Naive thymus-derived CD4-positive, alpha-beta T cell (primary cell): ENCODE measurements at regions of chr2 and their contacts with region 1.

Region 1: DNA sequence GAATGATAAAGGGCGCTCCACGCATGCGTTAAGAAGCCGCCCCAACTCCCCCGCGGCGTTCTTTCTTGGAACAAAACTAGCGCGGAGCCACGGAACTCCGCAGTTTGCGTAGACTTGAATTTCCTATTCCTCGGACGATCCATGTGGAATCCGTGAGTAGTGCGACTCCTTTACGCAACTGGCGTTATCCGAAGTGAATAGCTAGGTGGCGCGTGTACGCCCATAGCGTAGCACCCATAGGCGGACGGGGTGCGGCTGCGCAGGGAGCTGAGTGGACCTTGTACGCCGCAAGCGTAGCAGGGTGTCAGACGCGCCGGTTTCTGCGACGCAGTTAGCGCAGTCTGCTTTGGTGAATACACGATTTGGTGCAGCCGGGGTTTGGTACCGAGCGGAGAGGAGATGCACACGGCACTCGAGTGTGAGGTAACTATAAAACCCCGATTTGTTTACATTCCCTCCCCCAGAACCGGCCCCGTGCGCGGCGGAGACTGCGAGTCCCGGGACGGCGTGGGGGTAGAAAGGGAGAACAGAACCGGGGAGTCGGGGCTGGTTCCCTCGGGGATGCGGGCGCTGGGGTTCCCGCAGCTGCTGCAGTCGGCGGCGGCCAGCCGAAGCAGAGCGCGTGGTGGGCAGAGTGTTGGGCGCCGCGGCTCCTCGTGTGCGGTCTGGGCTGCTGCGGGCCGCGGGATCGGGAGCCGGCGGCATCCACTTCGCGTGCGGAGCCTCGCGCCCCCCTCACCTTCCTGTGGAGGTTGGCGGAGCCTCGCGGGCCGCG is at the start of gene SLC39A10:
- DNase-seq: peak; percentile 95 to 100 (median 98)
- ATAC-seq: peak; percentile 86
- H3K4me3 ChIP-seq: peak within 1 kb of the TSS; percentile 81
- H3K4me3 Mint-ChIP-seq: peak within 1 kb of the TSS; percentile 95 to 100 (median 99)
- H3K27ac ChIP-seq: peak within 1 kb of the TSS; percentile 99
- H3K27ac Mint-ChIP-seq: peak within 1 kb of the TSS; percentile 100
- H3K4me1 ChIP-seq: peaks cover 3 to 24% of the 10 kb centered on the region in 2 donors
- H3K4me1 Mint-ChIP-seq: peaks cover 7 to 36% (median 30%) of the 10 kb centered on the region in 7 donors
- H3K27me3 ChIP-seq: no peaks in the 10 kb centered on the region
- H3K27me3 Mint-ChIP-seq: peaks cover 0 to 9% (median 0%) of the 10 kb centered on the region in 5 donors
- total RNA-seq, gene SLC39A10: 48.3 to 92.9 (median 60.7) TPM

Region 2: GRCh38 chr2:194464964-194465638 is 1191.9 kb before region 1 on chr2:
- CTCF ChIA-PET with region 1: no interaction called
- POLR2A ChIA-PET with region 1: no interaction called
- intact Hi-C with region 1: loop called in 1 of 2 experiments (anchors 1 kb)
- DNase-seq: peak in 2 of 9 donors; percentile 11 to 25
- ATAC-seq: no peak
- H3K4me3 ChIP-seq: no peak overlapping the region
- H3K4me3 Mint-ChIP-seq: no peak overlapping the region
- H3K27ac ChIP-seq: no peak overlapping the region
- H3K27ac Mint-ChIP-seq: no peak overlapping the region
- H3K4me1 ChIP-seq: no peaks in the 10 kb centered on the region
- H3K4me1 Mint-ChIP-seq: no peaks in the 10 kb centered on the region
- H3K27me3 ChIP-seq: no peaks in the 10 kb centered on the region
- H3K27me3 Mint-ChIP-seq: no peaks in the 10 kb centered on the region

Region 3: GRCh38 chr2:195407782-195408181 is 249.3 kb before region 1 on chr2:
- CTCF ChIA-PET with region 1: interaction called, 8 read pairs
- POLR2A ChIA-PET with region 1: interaction called, 3 read pairs
- intact Hi-C with region 1: loop called in 1 of 2 experiments (anchors 1 kb)
- DNase-seq: no peak
- ATAC-seq: no peak
- H3K4me3 ChIP-seq: no peak overlapping the region
- H3K4me3 Mint-ChIP-seq: no peak overlapping the region
- H3K27ac ChIP-seq: no peak overlapping the region
- H3K27ac Mint-ChIP-seq: peak overlapping the region in 1 of 9 donors; percentile 76
- H3K4me1 ChIP-seq: no peaks in the 10 kb centered on the region
- H3K4me1 Mint-ChIP-seq: peaks cover 0 to 17% (median under 1%) of the 10 kb centered on the region in 7 donors
- H3K27me3 ChIP-seq: no peaks in the 10 kb centered on the region
- H3K27me3 Mint-ChIP-seq: no peaks in the 10 kb centered on the region

Region 4: DNA sequence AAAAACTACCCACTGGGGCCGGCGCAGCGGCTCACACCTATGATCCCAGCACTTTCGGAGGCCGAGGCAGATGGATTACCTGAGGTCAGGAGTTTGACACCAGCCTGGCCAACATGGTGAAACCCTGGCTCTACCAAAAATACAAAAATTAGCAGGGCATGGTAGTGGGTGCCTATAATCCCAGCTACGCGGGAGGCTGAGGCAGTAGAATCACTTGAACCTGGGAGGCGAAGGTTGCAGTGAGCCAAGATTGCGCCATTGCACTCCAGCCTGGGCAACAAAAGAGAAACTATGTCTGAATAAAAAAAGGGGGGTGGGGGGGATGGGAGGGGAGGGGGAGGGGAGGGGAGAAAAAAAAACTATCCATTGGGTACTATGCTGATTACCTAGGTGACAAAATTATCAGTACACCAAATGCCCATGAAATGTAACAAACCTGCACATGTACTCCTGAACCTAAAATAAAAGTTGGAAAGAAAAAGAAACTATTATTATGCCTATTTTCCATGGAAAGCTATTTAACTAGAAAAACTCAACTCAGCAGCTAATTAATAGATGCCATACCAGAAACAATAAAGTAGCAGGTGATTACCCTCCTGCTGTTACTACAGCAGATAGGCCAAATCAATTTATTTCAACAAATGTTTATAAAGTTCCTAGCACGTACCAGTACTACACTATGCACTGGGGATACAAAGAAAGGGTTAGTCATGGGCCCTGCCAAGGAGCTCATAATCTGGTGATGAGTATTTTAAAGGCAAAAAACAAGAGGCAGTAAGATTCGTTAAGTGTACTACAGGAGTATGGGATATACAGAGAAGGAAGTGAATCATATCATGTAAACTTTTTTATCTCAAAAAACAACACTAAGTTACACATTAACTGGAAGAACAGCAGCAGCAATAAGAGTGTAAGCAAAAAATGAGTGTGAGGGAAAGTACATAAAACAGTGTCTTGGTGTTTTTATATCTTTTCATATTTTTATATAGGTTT is 112.8 kb before region 1 on chr2:
- CTCF ChIA-PET with region 1: interaction called, 3 read pairs
- POLR2A ChIA-PET with region 1: interaction called, 196 read pairs
- intact Hi-C with region 1: no loop called
- DNase-seq: no peak
- ATAC-seq: peak; percentile 41
- H3K4me3 ChIP-seq: no peak overlapping the region
- H3K4me3 Mint-ChIP-seq: peak overlapping the region in 9 of 10 donors; percentile 0 to 70 (median 54)
- H3K27ac ChIP-seq: peak overlapping the region; percentile 52
- H3K27ac Mint-ChIP-seq: peak overlapping the region; percentile 24 to 100 (median 85)
- H3K4me1 ChIP-seq: peaks cover 20 to 27% of the 10 kb centered on the region in 2 donors
- H3K4me1 Mint-ChIP-seq: peaks cover 29 to 80% (median 61%) of the 10 kb centered on the region in 7 donors
- H3K27me3 ChIP-seq: no peaks in the 10 kb centered on the region
- H3K27me3 Mint-ChIP-seq: no peaks in the 10 kb centered on the region

Region 5: GRCh38 chr2:195937176-195937575 is 280.1 kb after region 1 on chr2:
- CTCF ChIA-PET with region 1: interaction called, 3 read pairs
- POLR2A ChIA-PET with region 1: no interaction called
- intact Hi-C with region 1: loop called in 1 of 2 experiments (anchors 2 kb)
- DNase-seq: no peak
- ATAC-seq: no peak
- H3K4me3 ChIP-seq: no peak overlapping the region
- H3K4me3 Mint-ChIP-seq: no peak overlapping the region
- H3K27ac ChIP-seq: no peak overlapping the region
- H3K27ac Mint-ChIP-seq: no peak overlapping the region
- H3K4me1 ChIP-seq: no peaks in the 10 kb centered on the region
- H3K4me1 Mint-ChIP-seq: no peaks in the 10 kb centered on the region
- H3K27me3 ChIP-seq: no peaks in the 10 kb centered on the region
- H3K27me3 Mint-ChIP-seq: peaks cover 0 to 15% (median 9%) of the 10 kb centered on the region in 5 donors

Region 6: DNA sequence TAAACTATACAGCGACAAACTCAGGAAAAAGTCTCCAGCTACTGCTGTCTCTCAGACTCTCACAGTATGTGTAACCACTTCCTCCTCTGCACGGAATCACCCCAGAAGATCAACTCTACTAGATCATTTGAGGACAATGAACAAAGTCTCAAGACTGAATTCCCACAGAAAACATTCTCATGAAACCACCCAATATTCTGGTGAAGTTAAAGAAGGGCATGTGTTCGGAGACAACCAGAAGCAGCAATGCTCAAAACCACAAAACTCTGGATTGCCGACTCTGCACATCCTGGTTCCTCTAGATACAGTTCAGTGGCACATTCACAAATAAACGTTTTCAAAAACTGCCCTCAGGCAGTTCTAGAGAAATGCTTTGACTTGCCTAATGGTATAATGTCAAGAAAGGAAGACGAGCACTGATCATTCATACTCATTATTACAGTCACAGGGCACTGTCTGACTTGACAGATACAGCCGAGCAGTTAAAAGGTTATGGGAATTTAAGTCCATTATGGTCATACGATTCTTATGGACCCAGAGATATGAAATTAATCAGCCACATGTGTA is 606.2 kb after region 1 on chr2:
- CTCF ChIA-PET with region 1: no interaction called
- POLR2A ChIA-PET with region 1: interaction called, 4 read pairs
- intact Hi-C with region 1: loop called (anchors 5 kb)
- DNase-seq: peak in 7 of 9 donors; percentile 70 to 88 (median 83)
- ATAC-seq: peak; percentile 90
- H3K4me3 ChIP-seq: peak overlapping the region; percentile 31
- H3K4me3 Mint-ChIP-seq: peak overlapping the region; percentile 63 to 90 (median 82)
- H3K27ac ChIP-seq: peak overlapping the region; percentile 87
- H3K27ac Mint-ChIP-seq: peak overlapping the region; percentile 90 to 99 (median 97)
- H3K4me1 ChIP-seq: peaks cover 53 to 82% of the 10 kb centered on the region in 2 donors
- H3K4me1 Mint-ChIP-seq: peaks cover 39 to 94% (median 89%) of the 10 kb centered on the region in 7 donors
- H3K27me3 ChIP-seq: no peaks in the 10 kb centered on the region
- H3K27me3 Mint-ChIP-seq: no peaks in the 10 kb centered on the region

Region 7: GRCh38 chr2:196639180-196640030 is 982.4 kb after region 1 on chr2 and contains the start of gene CCDC150:
- CTCF ChIA-PET with region 1: no interaction called
- POLR2A ChIA-PET with region 1: no interaction called
- intact Hi-C with region 1: loop called in 1 of 2 experiments (anchors 1 kb)
- DNase-seq: peak; percentile 88 to 95 (median 94)
- ATAC-seq: peak; percentile 100
- H3K4me3 ChIP-seq: peak within 1 kb of the TSS; percentile 86
- H3K4me3 Mint-ChIP-seq: peak within 1 kb of the TSS; percentile 82 to 92 (median 88)
- H3K27ac ChIP-seq: peak within 1 kb of the TSS; percentile 48
- H3K27ac Mint-ChIP-seq: peak within 1 kb of the TSS in 8 of 9 donors; percentile 30 to 78 (median 43)
- H3K4me1 ChIP-seq: peaks cover 7 to 8% of the 10 kb centered on the region in 2 donors
- H3K4me1 Mint-ChIP-seq: peaks cover 4 to 26% (median 19%) of the 10 kb centered on the region in 7 donors
- H3K27me3 ChIP-seq: no peaks in the 10 kb centered on the region
- H3K27me3 Mint-ChIP-seq: peaks cover 0 to 15% (median 0%) of the 10 kb centered on the region in 5 donors
- total RNA-seq, gene CCDC150: 0.13 to 11.2 (median 1.2) TPM